BJ (cell line): ENCODE measurements at regions of chr18 and their contacts with region 1.

Region 1: DNA sequence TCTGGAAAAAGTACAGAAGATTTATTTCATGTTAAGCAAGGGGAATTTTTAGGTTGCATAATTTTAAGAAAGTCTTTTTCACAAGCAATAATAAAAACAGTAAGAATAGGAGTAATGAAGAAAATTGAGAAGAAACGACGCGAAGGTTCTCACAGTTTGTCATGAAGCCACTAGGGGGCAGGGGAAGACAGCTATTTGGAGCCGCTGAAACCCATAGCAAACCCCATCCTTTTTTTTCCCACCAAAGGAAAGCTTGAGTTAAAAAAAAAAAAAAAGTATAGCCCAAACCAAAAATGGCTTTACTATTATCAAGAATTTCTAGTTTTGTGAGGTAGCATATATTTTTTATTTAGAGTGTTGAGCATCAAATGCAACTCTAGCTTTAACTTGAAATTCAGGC is 300.9 kb downstream of the PHLPP1 start:
- DNase-seq: peak; percentile 7
- H3K4me3 ChIP-seq: no peak overlapping the region
- H3K27me3 ChIP-seq: peaks cover 8% of the 10 kb centered on the region
- CTCF ChIP-seq: peak; percentile 80

Region 2: DNA sequence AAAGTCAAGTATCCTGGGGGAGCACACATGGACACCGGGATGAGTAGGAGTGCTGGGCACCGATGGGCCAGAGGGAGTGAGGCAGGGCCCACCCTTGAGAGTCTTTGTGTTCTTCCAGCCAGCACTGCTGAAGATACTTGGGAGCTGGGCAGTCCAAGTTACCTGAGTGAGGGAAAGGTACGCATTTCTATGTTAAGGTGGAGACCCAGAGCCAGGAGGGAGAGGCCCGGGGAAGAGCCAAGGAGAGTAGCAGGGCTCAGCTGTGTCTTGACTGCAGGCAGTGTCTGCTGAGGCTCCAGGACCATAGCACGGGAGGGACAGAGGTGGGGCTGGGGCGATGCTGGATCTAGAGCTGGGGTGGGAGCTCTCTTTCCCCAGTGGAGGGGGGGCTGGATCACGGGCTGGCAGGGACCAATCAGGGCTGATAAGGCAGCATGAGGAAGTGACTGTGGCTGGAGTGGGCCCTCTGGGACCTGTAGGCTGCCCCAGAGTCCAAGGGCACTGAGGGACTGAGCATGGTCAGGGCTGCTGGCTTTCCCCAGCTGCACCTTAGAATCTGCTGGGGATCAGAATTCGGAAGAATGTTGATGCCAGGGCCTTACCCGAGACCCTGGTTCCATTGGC is 11.7 kb before region 1 on chr18:
- CTCF ChIA-PET with region 1: interaction called, 23 read pairs
- POLR2A ChIA-PET with region 1: no interaction called
- DNase-seq: no peak
- H3K4me3 ChIP-seq: no peak overlapping the region
- H3K27me3 ChIP-seq: peaks cover 3% of the 10 kb centered on the region; the same call in 1 of the 2 replicates
- CTCF ChIP-seq: no peak

Region 3: GRCh38 chr18:63138436-63139340 is 122.4 kb after region 1 on chr18:
- CTCF ChIA-PET with region 1: no interaction called
- POLR2A ChIA-PET with region 1: no interaction called
- DNase-seq: no peak
- H3K4me3 ChIP-seq: no peak overlapping the region
- H3K27me3 ChIP-seq: peaks cover 7% of the 10 kb centered on the region
- CTCF ChIP-seq: no peak